H1 (cell line): ENCODE measurements at regions of chr2 and their contacts with region 1.

Region 1: GRCh38 chr2:23330214-23330613 is 54.8 kb upstream of the KLHL29 start:
- DNase-seq: peak; percentile 54 to 79
- H3K4me3 ChIP-seq: no peak overlapping the region
- H3K27ac ChIP-seq: no peak overlapping the region
- H3K4me1 ChIP-seq: no peaks in the 10 kb centered on the region
- H3K27me3 ChIP-seq: no peaks in the 10 kb centered on the region
- CTCF ChIP-seq: peak; percentile 70 to 82 (median 74)
- EP300 ChIP-seq: no peak
- POLR2A ChIP-seq: no peak
- RAD21 ChIP-seq: peak; percentile 79 to 84

Region 2: GRCh38 chr2:23286758-23287704 is 43.2 kb before region 1 on chr2:
- CTCF ChIA-PET with region 1: no interaction called
- POLR2A ChIA-PET with region 1: no interaction called
- DNase-seq: no peak
- H3K4me3 ChIP-seq: no peak overlapping the region
- H3K27ac ChIP-seq: no peak overlapping the region
- H3K4me1 ChIP-seq: peaks cover 0 to 8% (median 2%) of the 10 kb centered on the region in 4 experiments; a peak in 4 of 7 replicates
- H3K27me3 ChIP-seq: no peaks in the 10 kb centered on the region
- CTCF ChIP-seq: no peak
- EP300 ChIP-seq: no peak
- POLR2A ChIP-seq: no peak
- RAD21 ChIP-seq: no peak

Region 3: DNA sequence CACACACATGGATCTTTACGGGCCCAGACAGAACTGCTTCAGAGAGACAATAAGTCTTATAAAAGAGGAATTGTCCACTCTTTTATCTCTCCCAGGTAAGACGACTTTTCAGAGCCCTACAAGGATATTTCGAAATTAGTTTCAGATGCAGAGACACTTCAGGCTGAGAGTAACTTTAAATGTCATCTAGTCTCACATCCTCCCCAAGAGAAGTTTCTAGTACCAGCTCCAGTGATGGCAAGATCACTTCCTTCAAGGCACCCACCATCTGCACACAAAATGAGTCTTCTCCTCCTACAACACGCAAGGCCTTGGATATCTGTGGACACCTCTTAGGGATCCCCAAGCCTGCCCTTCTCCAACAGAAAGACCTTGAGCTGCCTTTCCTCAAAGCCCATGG is 15.8 kb after region 1 on chr2:
- CTCF ChIA-PET with region 1: interaction called, 16 read pairs
- POLR2A ChIA-PET with region 1: interaction called, 4 read pairs
- DNase-seq: no peak
- H3K4me3 ChIP-seq: no peak overlapping the region
- H3K27ac ChIP-seq: no peak overlapping the region
- H3K4me1 ChIP-seq: peaks cover 0 to 3% (median 0%) of the 10 kb centered on the region in 4 experiments; a peak in 1 of 7 replicates
- H3K27me3 ChIP-seq: peaks cover 0 to 5% (median under 1%) of the 10 kb centered on the region in 4 experiments; a peak in 4 of 7 replicates
- CTCF ChIP-seq: no peak
- EP300 ChIP-seq: no peak
- POLR2A ChIP-seq: no peak
- RAD21 ChIP-seq: no peak

Region 4: DNA sequence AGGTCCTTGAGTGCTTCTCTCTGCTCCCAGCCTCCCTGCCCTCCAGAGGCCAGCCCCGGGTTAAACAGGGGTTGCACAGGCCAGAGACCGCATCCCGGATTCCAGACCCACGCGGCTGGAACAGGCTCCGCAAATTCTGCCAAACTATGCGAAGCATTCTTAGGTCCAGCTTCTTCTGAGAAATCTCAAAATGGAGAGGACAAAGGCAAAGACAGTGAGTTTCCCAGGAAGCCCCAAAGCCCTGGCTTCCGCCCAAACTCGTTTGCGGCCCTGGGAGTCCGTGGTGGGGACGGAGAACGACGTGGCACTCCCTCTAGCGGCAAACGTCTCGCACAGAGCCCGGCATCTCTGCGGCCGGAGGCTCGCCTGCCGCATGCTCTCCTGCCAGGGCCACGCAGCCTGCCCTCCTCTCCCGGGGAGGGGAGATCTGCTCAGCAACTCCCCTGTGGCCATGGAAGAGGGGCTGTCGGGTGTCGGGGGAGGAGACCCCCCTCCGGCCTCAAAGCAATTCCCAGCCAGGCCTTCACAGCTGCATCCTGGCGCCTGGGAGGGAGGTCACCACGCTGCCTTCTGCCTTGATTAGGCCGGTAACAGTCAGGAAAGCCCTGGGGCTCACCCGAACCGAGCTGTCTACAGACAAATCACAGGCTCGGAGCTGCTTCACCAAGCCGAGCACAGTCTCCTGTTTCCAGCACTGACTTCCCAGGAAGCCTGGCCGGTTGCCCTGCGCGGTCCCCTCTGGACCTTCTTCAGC is 21.4 kb after region 1 on chr2:
- CTCF ChIA-PET with region 1: interaction called, 16 read pairs
- POLR2A ChIA-PET with region 1: interaction called, 4 read pairs
- DNase-seq: peak; percentile 61 to 92
- H3K4me3 ChIP-seq: peak overlapping the region in 3 of 4 experiments; percentile 5 to 19 (median 19); a peak in 1 of 8 replicates
- H3K27ac ChIP-seq: no peak overlapping the region
- H3K4me1 ChIP-seq: peaks cover 0 to 5% (median 3%) of the 10 kb centered on the region in 4 experiments; a peak in 5 of 7 replicates
- H3K27me3 ChIP-seq: peaks cover 0 to 14% (median 8%) of the 10 kb centered on the region in 4 experiments; a peak in 5 of 7 replicates
- CTCF ChIP-seq: peak; percentile 78 to 90 (median 90)
- EP300 ChIP-seq: no peak
- POLR2A ChIP-seq: peak in 1 of 2 experiments; percentile 17; a peak in 1 of 3 replicates
- RAD21 ChIP-seq: peak; percentile 64 to 78

Region 5: GRCh38 chr2:23566236-23567142 is 236.3 kb after region 1 on chr2:
- CTCF ChIA-PET with region 1: interaction called, 11 read pairs
- POLR2A ChIA-PET with region 1: no interaction called
- DNase-seq: peak; percentile 31 to 80
- H3K4me3 ChIP-seq: no peak overlapping the region
- H3K27ac ChIP-seq: no peak overlapping the region
- H3K4me1 ChIP-seq: peaks cover 0 to 10% (median 8%) of the 10 kb centered on the region in 4 experiments; a peak in 4 of 7 replicates
- H3K27me3 ChIP-seq: no peaks in the 10 kb centered on the region
- CTCF ChIP-seq: peak; percentile 52 to 88 (median 82)
- EP300 ChIP-seq: no peak
- POLR2A ChIP-seq: no peak
- RAD21 ChIP-seq: peak; percentile 61 to 71